ENCODE measurements at regions of chr22 and their contacts with region 1.

Region 1: GRCh38 chr22:27107824-27108223 is 450.4 kb downstream of the MIAT start:
- DNase-seq: peak; percentile 75 to 82 (median 80)
- ATAC-seq: peak; percentile 15 to 66
- H3K4me3 ChIP-seq: no peak overlapping the region
- H3K27ac ChIP-seq: no peak overlapping the region
- H3K4me1 ChIP-seq: peaks cover 2% of the 10 kb centered on the region
- H3K27me3 ChIP-seq: no peaks in the 10 kb centered on the region

Region 2: DNA sequence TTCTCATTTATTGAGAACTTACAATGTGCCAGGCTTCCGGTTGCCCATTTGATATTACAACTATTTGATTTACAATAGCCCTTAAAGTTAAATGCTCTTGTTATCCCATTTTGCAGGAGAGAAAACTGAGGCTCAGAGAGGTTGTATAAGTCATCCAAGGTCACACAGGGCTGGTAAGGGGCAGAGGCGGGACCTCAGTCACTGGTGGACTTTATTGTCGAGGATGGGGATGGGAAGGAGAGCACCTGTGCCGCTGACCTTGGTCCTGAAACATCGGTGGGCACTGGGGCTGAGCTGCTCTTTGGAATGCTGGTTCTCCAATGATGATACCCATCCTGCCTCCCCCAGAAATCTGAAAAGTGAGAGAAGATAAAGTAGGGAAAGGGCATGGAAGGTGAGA is 185.0 kb before region 1 on chr22:
- intact Hi-C with region 1: no loop called
- DNase-seq: no peak
- ATAC-seq: no peak
- H3K4me3 ChIP-seq: no peak overlapping the region
- H3K27ac ChIP-seq: no peak overlapping the region
- H3K4me1 ChIP-seq: no peaks in the 10 kb centered on the region
- H3K27me3 ChIP-seq: no peaks in the 10 kb centered on the region

Region 3: GRCh38 chr22:27241430-27242321 is 133.9 kb after region 1 on chr22:
- intact Hi-C with region 1: loop called in 1 of 4 experiments (anchors 10 kb)
- DNase-seq: peak; percentile 71 to 92 (median 85)
- ATAC-seq: peak; percentile 52 to 65
- H3K4me3 ChIP-seq: no peak overlapping the region
- H3K27ac ChIP-seq: no peak overlapping the region
- H3K4me1 ChIP-seq: peaks cover 10% of the 10 kb centered on the region
- H3K27me3 ChIP-seq: no peaks in the 10 kb centered on the region

Region 4: GRCh38 chr22:27274770-27275449 is 167.1 kb after region 1 on chr22:
- intact Hi-C with region 1: no loop called
- DNase-seq: no peak
- ATAC-seq: no peak
- H3K4me3 ChIP-seq: no peak overlapping the region
- H3K27ac ChIP-seq: no peak overlapping the region
- H3K4me1 ChIP-seq: no peaks in the 10 kb centered on the region
- H3K27me3 ChIP-seq: no peaks in the 10 kb centered on the region